A673 (cell line): ENCODE measurements at regions of chrX and their contacts with region 1.

Region 1: GRCh38 chrX:44143061-44143602 is 169.9 kb upstream of the NDP start:
- DNase-seq: no peak
- H3K4me3 ChIP-seq: no peak overlapping the region
- H3K27ac ChIP-seq: no peak overlapping the region
- H3K4me1 ChIP-seq: no peaks in the 10 kb centered on the region
- H3K27me3 ChIP-seq: peaks cover 9% of the 10 kb centered on the region
- CTCF ChIP-seq: no peak

Region 2: DNA sequence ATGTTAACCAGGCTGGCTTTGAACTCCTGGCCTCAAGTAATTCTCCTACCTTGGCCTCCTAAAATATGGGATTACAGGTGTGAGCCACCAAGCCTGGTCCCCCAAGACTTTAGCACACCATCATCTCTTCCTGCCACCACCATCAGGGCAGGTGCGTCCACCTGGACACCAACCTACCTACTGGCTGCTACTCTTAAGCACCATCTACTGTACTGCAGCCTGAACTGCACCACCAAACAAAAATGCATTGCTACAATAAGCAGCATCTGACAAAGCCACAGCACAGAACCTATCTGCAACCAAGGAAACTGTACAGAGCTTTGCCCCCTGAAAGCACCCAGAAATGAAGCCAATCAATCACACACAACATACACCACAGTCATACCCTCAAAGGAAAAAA is 60.7 kb after region 1 on chrX:
- CTCF ChIA-PET with region 1: no interaction called
- POLR2A ChIA-PET with region 1: no interaction called
- intact Hi-C with region 1: loop called (anchors 10 kb)
- DNase-seq: no peak
- H3K4me3 ChIP-seq: no peak overlapping the region
- H3K27ac ChIP-seq: no peak overlapping the region
- H3K4me1 ChIP-seq: no peaks in the 10 kb centered on the region
- H3K27me3 ChIP-seq: peaks cover 17% of the 10 kb centered on the region
- CTCF ChIP-seq: peak; percentile 43; the same call in 1 of the 2 replicates